Activated naive CD4-positive, alpha-beta T cell treated with anti-CD3 and anti-CD28 coated beads for 36 hours (primary cell): ENCODE measurements at regions of chr18 and their contacts with region 1.

Region 1: GRCh38 chr18:11040823-11041656 is 108.3 kb downstream of the PIEZO2 start:
- DNase-seq: peak; percentile 30
- H3K4me3 Mint-ChIP-seq: no peak overlapping the region
- H3K27ac Mint-ChIP-seq: no peak overlapping the region
- H3K4me1 Mint-ChIP-seq: no peaks in the 10 kb centered on the region
- H3K27me3 Mint-ChIP-seq: peaks cover 16% of the 10 kb centered on the region

Region 2: GRCh38 chr18:10560450-10561045 is 480.5 kb before region 1 on chr18:
- CTCF ChIA-PET with region 1: no interaction called
- intact Hi-C with region 1: loop called (anchors 1 kb)
- DNase-seq: peak; percentile 82
- H3K4me3 Mint-ChIP-seq: no peak overlapping the region
- H3K27ac Mint-ChIP-seq: no peak overlapping the region
- H3K4me1 Mint-ChIP-seq: peaks cover 3% of the 10 kb centered on the region
- H3K27me3 Mint-ChIP-seq: no peaks in the 10 kb centered on the region